ENCODE measurements at regions of chr18 and their contacts with region 1.

Region 1: GRCh38 chr18:77061946-77062517 is 70.6 kb downstream of the MBP start:
- DNase-seq: no peak
- ATAC-seq: peak; percentile 36 to 57 (median 56)
- H3K4me3 ChIP-seq: no peak overlapping the region
- H3K27ac ChIP-seq: peak overlapping the region; percentile 74
- H3K4me1 ChIP-seq: peaks cover 37% of the 10 kb centered on the region
- H3K27me3 ChIP-seq: no peaks in the 10 kb centered on the region
- CTCF ChIP-seq: no peak

Region 2: GRCh38 chr18:76803814-76804213 is 258.2 kb before region 1 on chr18:
- intact Hi-C with region 1: no loop called
- DNase-seq: peak in 1 of 2 donors; percentile 47
- ATAC-seq: peak; percentile 55 to 81 (median 77)
- H3K4me3 ChIP-seq: no peak overlapping the region
- H3K27ac ChIP-seq: no peak overlapping the region
- H3K4me1 ChIP-seq: peaks cover 3% of the 10 kb centered on the region
- H3K27me3 ChIP-seq: peaks cover 0 to 4% (median 0%) of the 10 kb centered on the region in 3 donors
- CTCF ChIP-seq: peak; percentile 73

Region 3: GRCh38 chr18:76932026-76932819 is 129.8 kb before region 1 on chr18:
- intact Hi-C with region 1: loop called in 1 of 2 experiments (anchors 5 kb)
- DNase-seq: peak; percentile 76 to 88
- ATAC-seq: peak; percentile 97 to 99 (median 98)
- H3K4me3 ChIP-seq: no peak overlapping the region
- H3K27ac ChIP-seq: peak overlapping the region; percentile 85
- H3K4me1 ChIP-seq: peaks cover 20% of the 10 kb centered on the region
- H3K27me3 ChIP-seq: no peaks in the 10 kb centered on the region
- CTCF ChIP-seq: no peak

Region 4: DNA sequence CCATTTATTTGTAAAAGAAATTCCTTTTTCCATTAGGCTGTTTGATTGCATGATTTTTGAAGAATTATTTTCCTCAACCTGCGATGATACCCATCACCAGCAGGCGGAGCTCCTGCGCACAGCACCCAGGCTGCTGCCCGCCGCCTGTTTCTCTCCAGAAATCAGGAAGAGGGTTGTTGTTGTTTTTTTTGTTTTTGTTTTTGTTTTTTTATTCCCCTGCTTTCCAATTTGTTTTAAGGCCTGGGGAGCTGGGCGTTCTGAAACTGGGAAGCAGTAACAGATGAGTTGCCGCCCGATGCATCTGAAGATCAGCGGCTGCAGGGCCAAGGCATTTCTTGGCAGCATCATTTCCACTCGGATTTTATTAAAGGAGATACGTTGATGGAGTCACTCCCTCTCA is 61.5 kb before region 1 on chr18:
- intact Hi-C with region 1: loop called in 1 of 2 experiments (anchors 2 kb)
- DNase-seq: peak; percentile 58 to 75
- ATAC-seq: peak; percentile 34 to 74 (median 61)
- H3K4me3 ChIP-seq: peak overlapping the region; percentile 43
- H3K27ac ChIP-seq: no peak overlapping the region
- H3K4me1 ChIP-seq: peaks cover 4% of the 10 kb centered on the region
- H3K27me3 ChIP-seq: no peaks in the 10 kb centered on the region
- CTCF ChIP-seq: peak; percentile 99

Region 5: DNA sequence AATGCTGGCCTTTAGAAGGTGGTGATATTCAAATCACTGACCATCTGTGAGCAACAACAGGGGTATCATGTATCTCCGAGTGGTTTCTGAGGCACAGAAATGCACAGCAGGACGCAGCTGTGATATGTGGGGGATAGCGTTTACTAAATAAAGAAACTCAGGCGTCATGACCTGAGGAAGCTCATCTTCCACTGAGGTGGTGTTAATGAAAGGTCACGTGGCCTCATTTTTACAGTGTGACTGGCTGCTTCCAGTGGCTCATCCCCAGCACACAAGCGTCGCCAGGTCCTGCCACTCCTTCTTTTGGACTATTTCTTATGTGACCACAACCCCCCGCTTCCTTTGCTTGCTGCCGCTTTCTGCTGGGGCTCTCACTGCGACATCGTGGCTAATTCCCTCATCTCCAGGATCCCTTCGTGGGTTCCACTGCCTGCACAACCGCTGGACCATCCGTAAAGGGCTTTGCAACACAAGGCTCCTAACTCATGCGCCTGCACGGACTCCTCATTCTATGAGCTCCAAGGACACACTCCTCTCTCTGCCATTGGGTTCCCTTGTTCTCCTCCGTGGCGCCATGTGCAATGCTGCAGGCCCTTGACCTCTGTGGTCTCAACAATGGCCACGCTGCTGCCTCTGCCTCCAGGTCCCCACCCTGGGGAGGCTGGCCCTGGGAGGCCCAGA is 38.8 kb before region 1 on chr18:
- intact Hi-C with region 1: no loop called
- DNase-seq: peak in 1 of 2 donors; percentile 69
- ATAC-seq: peak; percentile 94 to 99 (median 98)
- H3K4me3 ChIP-seq: no peak overlapping the region
- H3K27ac ChIP-seq: peak overlapping the region; percentile 84
- H3K4me1 ChIP-seq: peaks cover 17% of the 10 kb centered on the region
- H3K27me3 ChIP-seq: no peaks in the 10 kb centered on the region
- CTCF ChIP-seq: no peak

Measured in psoas muscle (tissue), 8 donors.